IMR-90 (cell line): ENCODE measurements at regions of chr1 and their contacts with region 1.

Region 1: DNA sequence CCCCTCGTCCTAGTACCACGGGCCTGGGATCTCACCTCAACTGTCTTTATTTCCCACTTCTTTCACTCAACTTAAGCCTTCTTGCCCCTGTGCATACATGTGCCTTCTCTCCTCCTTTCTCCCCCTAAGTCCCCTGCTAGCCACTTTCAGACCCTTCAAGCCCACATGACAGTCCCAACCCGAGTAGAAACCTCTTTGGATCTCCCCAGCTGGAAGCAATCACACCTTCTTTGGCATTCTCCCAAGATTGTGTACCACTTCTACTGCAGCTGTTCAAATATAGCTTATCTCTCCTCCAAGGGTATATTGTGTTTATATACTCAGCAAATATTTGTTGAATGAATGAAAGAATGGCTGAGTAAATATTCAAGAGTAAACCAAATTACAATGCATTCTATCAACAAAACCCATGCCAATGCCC is 68.8 kb downstream of the NIBAN1 start:
- DNase-seq: no peak
- ATAC-seq: no peak
- H3K4me3 ChIP-seq: no peak overlapping the region
- H3K27ac ChIP-seq: no peak overlapping the region
- H3K4me1 ChIP-seq: peaks cover 5% of the 10 kb centered on the region
- H3K27me3 ChIP-seq: no peaks in the 10 kb centered on the region
- CTCF ChIP-seq: no peak
- POLR2A ChIP-seq: no peak
- RAD21 ChIP-seq: no peak

Region 2: GRCh38 chr1:184866991-184867788 is 38.3 kb before region 1 on chr1:
- CTCF ChIA-PET with region 1: no interaction called
- POLR2A ChIA-PET with region 1: no interaction called
- dilution Hi-C with region 1: no loop called
- in situ Hi-C with region 1: no loop called
- intact Hi-C with region 1: no loop called
- DNase-seq: peak; percentile 96
- ATAC-seq: peak; percentile 85
- H3K4me3 ChIP-seq: no peak overlapping the region
- H3K27ac ChIP-seq: peak overlapping the region; percentile 75; the same call in 1 of the 2 replicates
- H3K4me1 ChIP-seq: peaks cover 5% of the 10 kb centered on the region
- H3K27me3 ChIP-seq: no peaks in the 10 kb centered on the region
- CTCF ChIP-seq: no peak
- POLR2A ChIP-seq: no peak
- RAD21 ChIP-seq: no peak

Region 3: GRCh38 chr1:184945029-184945428 is 39.5 kb after region 1 on chr1:
- CTCF ChIA-PET with region 1: no interaction called
- POLR2A ChIA-PET with region 1: no interaction called
- dilution Hi-C with region 1: no loop called
- in situ Hi-C with region 1: no loop called
- intact Hi-C with region 1: loop called (anchors 5 kb)
- DNase-seq: no peak
- ATAC-seq: no peak
- H3K4me3 ChIP-seq: no peak overlapping the region
- H3K27ac ChIP-seq: no peak overlapping the region
- H3K4me1 ChIP-seq: peaks cover 3% of the 10 kb centered on the region
- H3K27me3 ChIP-seq: no peaks in the 10 kb centered on the region
- CTCF ChIP-seq: no peak
- POLR2A ChIP-seq: no peak
- RAD21 ChIP-seq: no peak

Region 4: GRCh38 chr1:184973272-184974055 is 68.0 kb after region 1 on chr1:
- CTCF ChIA-PET with region 1: no interaction called
- POLR2A ChIA-PET with region 1: no interaction called
- dilution Hi-C with region 1: no loop called
- in situ Hi-C with region 1: no loop called
- intact Hi-C with region 1: loop called (anchors 5 kb)
- DNase-seq: peak; percentile 82
- ATAC-seq: peak; percentile 38
- H3K4me3 ChIP-seq: peak overlapping the region; percentile 74
- H3K27ac ChIP-seq: peak overlapping the region; percentile 64
- H3K4me1 ChIP-seq: peaks cover 11% of the 10 kb centered on the region
- H3K27me3 ChIP-seq: no peaks in the 10 kb centered on the region
- CTCF ChIP-seq: no peak
- POLR2A ChIP-seq: peak; percentile 42; the same call in 1 of the 2 replicates
- RAD21 ChIP-seq: no peak

Region 5: DNA sequence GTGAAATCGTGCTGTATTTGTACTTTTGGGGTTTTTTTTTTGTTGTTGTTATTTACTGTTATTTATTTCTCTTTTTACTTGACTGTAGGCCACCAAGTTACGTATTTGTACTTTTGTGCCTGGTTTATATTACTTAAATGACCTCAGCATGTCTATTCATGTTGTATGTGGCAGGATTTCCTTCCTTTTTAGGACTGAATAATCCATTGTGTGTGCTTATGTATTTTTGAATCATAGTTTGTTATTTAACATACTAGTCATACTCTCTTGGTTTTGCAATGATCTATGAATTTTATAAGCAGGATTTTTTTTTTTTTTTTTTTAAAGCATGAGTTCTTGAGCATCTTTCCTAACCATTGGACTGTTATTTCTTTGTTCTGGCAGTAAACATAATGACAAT is 191.0 kb after region 1 on chr1:
- CTCF ChIA-PET with region 1: no interaction called
- POLR2A ChIA-PET with region 1: no interaction called
- dilution Hi-C with region 1: no loop called
- in situ Hi-C with region 1: no loop called
- intact Hi-C with region 1: no loop called
- DNase-seq: peak; percentile 56
- ATAC-seq: no peak
- H3K4me3 ChIP-seq: no peak overlapping the region
- H3K27ac ChIP-seq: no peak overlapping the region
- H3K4me1 ChIP-seq: no peaks in the 10 kb centered on the region
- H3K27me3 ChIP-seq: no peaks in the 10 kb centered on the region
- CTCF ChIP-seq: no peak
- POLR2A ChIP-seq: no peak
- RAD21 ChIP-seq: no peak

Region 6: DNA sequence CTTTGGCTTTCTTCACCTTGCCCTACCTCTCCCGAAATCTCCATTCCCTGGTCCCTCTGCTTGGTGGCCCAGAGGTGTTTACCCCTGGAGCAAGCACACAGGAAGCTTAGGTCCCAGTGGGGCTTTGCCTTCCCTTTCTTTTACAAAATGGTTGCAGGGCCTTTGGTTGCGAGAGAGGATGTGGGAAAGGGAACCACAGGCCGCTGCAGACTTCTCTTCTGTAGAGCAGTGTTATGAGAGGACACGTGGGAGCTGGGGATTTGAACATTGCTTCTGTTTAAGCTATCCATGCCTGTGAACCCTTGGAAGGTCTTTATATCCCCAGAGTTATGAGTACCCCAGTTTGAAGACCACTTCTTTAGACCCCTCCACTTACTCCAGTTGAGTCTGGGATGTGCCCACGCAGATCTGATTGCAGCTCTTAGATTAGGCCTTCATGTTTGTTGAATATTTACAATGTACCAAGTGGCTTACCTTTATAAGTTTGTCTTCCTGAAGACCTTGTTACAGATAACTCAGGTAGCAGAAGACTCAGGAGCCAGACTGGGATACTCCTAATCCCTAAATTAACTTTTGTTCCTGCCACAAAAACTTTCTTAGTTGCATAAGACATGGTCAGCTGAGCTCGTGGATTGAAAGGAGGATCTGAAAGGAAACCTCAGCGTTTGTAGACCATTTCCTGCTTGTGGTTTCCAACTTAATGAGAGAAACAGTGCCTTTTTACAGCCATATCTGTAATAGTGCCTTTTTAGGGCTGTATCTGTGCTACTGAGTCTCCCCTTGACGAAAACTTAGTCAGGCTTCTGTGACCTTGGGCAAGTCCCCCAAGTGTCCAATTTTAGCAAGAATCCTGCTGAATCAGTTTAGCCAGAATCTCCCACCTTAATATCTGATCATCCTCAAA is 433.5 kb after region 1 on chr1:
- CTCF ChIA-PET with region 1: no interaction called
- POLR2A ChIA-PET with region 1: no interaction called
- dilution Hi-C with region 1: no loop called
- in situ Hi-C with region 1: no loop called
- intact Hi-C with region 1: no loop called
- DNase-seq: no peak
- ATAC-seq: no peak
- H3K4me3 ChIP-seq: no peak overlapping the region
- H3K27ac ChIP-seq: no peak overlapping the region
- H3K4me1 ChIP-seq: no peaks in the 10 kb centered on the region
- H3K27me3 ChIP-seq: no peaks in the 10 kb centered on the region; the same call in 1 of the 2 replicates
- CTCF ChIP-seq: no peak
- POLR2A ChIP-seq: no peak
- RAD21 ChIP-seq: no peak